ENCODE measurements at regions of chr17 and their contacts with region 1.

Region 1: DNA sequence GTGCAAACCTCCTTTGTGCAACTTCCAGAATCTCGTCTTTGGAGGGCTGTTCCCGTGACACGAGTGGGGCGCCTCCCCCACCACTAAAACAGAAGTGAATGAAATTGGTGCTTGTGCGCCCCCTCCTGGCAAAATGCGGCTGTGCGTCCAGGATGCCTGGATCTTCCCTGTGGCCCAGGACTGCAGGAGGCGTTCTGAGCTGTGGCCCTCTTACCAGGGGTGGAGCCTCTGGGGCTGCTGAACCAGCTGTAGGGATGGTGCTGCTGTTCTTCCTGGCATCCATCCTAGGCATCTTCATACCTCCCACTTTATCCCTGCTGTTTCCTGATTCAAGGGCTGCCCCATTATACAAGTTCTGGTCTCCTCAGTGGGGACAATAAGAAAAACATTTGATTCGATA is 18.5 kb upstream of the NAGLU start:
- DNase-seq: peak; percentile 87
- ATAC-seq: peak; percentile 25 to 76

Region 2: DNA sequence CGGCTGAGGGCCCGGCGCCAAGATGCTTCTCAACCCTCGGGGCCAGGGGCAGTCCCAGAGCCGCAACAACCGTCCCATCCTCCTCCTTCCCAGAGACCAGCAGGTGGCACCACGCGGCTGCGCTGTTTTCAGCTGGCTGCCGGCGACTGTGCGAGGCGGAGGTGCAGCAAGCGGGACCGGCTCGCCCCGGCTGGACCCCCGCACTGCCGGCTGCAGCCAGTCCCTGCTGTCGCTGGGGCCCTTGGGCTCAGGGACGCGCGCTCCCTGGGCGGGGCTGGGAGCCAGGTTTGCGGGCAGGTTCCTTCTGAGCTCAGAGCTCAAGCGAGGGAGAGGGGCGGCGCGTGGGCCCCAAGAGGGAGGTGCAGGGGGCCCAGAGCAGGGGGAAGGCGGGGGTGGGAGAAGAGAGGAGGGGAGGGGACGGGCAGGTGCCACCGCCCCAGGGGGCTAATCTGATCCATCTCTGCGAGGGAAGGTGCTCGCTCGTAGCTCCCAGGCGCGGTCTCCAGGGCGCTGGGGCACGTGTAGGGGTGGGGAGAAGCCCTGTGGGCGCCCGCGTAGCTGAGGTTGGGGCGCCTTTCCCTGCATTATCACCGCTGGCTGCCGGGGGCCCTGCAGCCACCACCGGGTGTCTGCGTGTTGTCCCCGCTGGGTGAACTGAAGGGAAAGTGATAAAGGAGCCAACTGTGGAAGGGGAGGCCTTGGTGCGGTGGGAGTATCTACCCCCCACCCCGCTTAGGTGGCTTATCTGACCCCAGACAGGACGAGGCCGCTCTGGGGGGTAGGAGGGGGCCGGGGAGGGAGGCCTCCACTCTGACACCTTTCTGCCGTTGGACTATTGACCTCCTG is 205.0 kb before region 1 on chr17:
- intact Hi-C with region 1: loop called in 1 of 2 experiments (anchors 10 kb)
- DNase-seq: peak; percentile 92
- ATAC-seq: peak; percentile 81 to 86

Region 3: DNA sequence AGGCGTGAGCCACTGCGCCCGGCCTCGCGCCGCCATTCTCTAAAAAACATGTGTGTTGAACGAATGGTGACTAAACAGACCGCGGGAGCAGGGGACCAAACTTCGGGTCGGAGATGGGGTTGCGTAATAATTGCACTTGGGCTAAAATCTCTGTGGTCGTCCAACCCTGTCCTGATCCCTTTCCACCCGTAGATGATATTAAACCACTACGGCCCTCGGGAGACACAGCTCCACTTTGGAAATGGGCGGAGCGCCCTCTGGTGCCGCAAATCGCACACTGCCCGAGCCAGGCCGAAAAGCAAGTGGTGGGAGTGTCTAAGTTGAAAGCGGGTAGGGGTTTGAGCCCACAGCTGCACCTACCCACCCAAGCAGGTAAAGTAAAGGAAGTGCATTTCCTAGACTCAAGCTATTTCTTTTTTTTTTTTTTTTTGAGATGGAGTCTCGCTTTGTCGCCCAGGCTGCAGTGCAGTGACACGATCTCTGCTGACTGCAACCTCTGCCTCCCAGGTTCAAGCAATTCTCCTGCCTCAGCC is 111.5 kb before region 1 on chr17:
- intact Hi-C with region 1: loop called in 1 of 2 experiments (anchors 5 kb)
- DNase-seq: peak; percentile 88
- ATAC-seq: peak; percentile 49 to 68

Region 4: DNA sequence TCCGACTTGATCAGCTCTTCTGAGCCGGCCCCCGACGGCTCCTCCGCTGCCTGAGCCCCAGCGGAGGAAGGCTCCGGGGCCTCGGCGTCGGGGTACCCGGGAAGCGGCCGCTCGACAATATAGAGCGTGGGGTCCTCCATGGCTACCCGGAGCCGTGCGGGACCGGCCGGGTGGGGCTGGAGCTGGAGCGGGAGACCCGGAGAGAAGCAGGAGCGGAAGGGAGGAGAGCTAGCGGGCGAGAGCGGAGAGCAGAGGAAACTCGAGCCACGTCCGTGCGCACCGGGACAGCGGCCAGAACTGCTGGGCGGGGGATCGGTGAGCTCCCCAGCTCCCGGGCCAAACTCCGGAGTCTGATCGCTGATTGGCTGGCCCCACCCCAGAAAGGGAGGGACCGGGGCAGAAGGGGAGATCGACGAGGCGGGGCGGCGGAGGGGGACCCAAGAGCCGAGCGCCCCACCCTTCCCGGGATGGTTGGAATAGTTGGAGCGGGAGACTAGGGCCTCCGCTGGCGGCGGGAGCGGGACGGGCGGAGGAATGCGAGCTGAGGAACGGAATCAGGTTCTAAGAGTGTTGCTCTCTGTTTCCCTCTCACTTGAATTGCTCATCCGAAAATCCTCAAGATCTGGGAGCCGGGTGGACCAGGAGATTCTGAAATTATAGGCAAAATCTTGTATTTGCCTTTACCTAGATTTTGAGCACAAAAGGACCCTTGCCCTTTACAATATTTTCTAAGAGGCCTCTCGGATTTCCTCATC is 94.4 kb before region 1 on chr17 and contains the start of gene CAVIN1:
- intact Hi-C with region 1: loop called (anchors 5 to 10 kb)
- DNase-seq: peak; percentile 99
- ATAC-seq: peak; percentile 91 to 93
- total RNA-seq, gene CAVIN1: 258 to 297 TPM

Region 5: DNA sequence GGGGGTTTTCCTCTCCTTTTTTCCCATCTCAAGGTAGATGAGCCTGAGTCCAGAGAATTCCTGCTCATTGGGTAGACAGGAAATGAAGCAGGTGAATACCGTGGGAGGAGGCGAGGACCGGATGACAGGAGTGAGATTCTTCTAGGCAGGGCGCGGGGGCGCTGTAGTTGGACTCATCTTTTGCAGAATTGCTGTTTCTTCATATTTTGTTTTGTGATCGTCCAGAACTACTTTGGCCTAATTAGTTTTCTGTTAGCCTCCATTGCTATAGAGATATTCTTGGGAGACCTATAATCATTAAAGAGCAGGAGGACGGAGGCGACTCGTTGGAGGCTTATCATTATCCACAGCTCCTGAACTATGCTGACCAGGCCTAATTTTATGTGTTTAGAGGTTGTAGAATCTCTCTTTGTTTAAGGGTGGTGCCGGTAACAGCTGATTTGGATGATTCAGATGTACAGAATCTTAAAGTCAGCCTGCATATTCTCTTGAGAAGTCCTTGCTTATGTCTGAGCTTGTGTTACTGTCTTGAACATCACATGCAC is 58.2 kb before region 1 on chr17:
- intact Hi-C with region 1: loop called in 1 of 2 experiments (anchors 10 kb)
- DNase-seq: peak; percentile 56
- ATAC-seq: peak; percentile 21 to 52

Measured in left cardiac atrium (tissue), 4 donors.